ENCODE measurements at regions of chr16 and their contacts with region 1.

Region 1: GRCh38 chr16:86901491-86902260 is 323.3 kb downstream of the FOXL1 start:
- DNase-seq: peak; percentile 57
- H3K4me3 ChIP-seq: no peak overlapping the region
- H3K27ac ChIP-seq: no peak overlapping the region
- H3K4me1 ChIP-seq: peaks cover 16% of the 10 kb centered on the region
- H3K27me3 ChIP-seq: peaks cover 3% of the 10 kb centered on the region
- CTCF ChIP-seq: no peak

Region 2: DNA sequence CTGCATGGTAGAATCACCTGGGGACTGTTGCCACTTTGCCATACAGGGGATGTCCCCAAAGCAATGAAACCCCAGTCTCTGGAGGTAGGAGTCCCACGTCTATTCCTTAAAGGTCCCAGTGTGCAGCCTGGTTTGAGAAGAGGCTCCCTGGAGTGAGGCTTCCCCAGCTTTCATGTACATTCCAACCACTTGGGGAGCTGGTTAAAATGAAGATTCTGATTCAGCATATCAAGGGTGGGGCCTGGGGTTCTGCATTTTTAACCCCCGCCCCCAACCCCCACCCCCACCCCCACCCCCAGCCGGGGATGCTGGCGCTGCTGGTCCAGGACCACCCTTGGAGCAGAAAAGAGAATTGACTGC is 82.2 kb before region 1 on chr16:
- CTCF ChIA-PET with region 1: no interaction called
- dilution Hi-C with region 1: no loop called
- in situ Hi-C with region 1: no loop called
- intact Hi-C with region 1: no loop called
- DNase-seq: no peak
- H3K4me3 ChIP-seq: no peak overlapping the region
- H3K27ac ChIP-seq: no peak overlapping the region
- H3K4me1 ChIP-seq: peaks cover 25% of the 10 kb centered on the region
- H3K27me3 ChIP-seq: no peaks in the 10 kb centered on the region
- CTCF ChIP-seq: peak; percentile 25 to 40

Region 3: GRCh38 chr16:86961171-86961601 is 59.5 kb after region 1 on chr16:
- CTCF ChIA-PET with region 1: no interaction called
- dilution Hi-C with region 1: loop called (anchors 5 kb)
- in situ Hi-C with region 1: no loop called
- intact Hi-C with region 1: no loop called
- DNase-seq: no peak
- H3K4me3 ChIP-seq: no peak overlapping the region
- H3K27ac ChIP-seq: no peak overlapping the region
- H3K4me1 ChIP-seq: no peaks in the 10 kb centered on the region
- H3K27me3 ChIP-seq: peaks cover 2% of the 10 kb centered on the region
- CTCF ChIP-seq: no peak

Measured in mammary epithelial cell (primary cell).